Activated B cell treated with CpG ODN at 0.5 μM for 24 hours (primary cell): ENCODE measurements at regions of chr21 and their contacts with region 1.

Region 1: GRCh38 chr21:46635324-46636172 is at the start of gene PRMT2:
- DNase-seq: peak; percentile 99
- ATAC-seq: peak; percentile 92
- H3K4me3 Mint-ChIP-seq: peak within 1 kb of the TSS; percentile 92
- H3K27ac Mint-ChIP-seq: peak within 1 kb of the TSS; percentile 90
- H3K4me1 Mint-ChIP-seq: peaks cover 44% of the 10 kb centered on the region
- H3K27me3 Mint-ChIP-seq: peaks cover 11% of the 10 kb centered on the region
- CTCF ChIP-seq: no peak
- total RNA-seq, gene PRMT2: 48.5 and 52.4 TPM in 2 replicates

Region 2: GRCh38 chr21:46500224-46500856 is 135.2 kb before region 1 on chr21:
- CTCF ChIA-PET with region 1: no interaction called
- POLR2A ChIA-PET with region 1: interaction called, 15 read pairs
- intact Hi-C with region 1: no loop called
- DNase-seq: no peak
- ATAC-seq: no peak
- H3K4me3 Mint-ChIP-seq: no peak overlapping the region
- H3K27ac Mint-ChIP-seq: peak overlapping the region; percentile 21
- H3K4me1 Mint-ChIP-seq: peaks cover 31% of the 10 kb centered on the region
- H3K27me3 Mint-ChIP-seq: no peaks in the 10 kb centered on the region
- CTCF ChIP-seq: no peak

Region 3: GRCh38 chr21:46608672-46609111 is 26.9 kb before region 1 on chr21:
- CTCF ChIA-PET with region 1: no interaction called
- POLR2A ChIA-PET with region 1: interaction called, 10 read pairs
- intact Hi-C with region 1: no loop called
- DNase-seq: no peak
- ATAC-seq: no peak
- H3K4me3 Mint-ChIP-seq: no peak overlapping the region
- H3K27ac Mint-ChIP-seq: no peak overlapping the region
- H3K4me1 Mint-ChIP-seq: peaks cover 26% of the 10 kb centered on the region
- H3K27me3 Mint-ChIP-seq: peaks cover 5% of the 10 kb centered on the region
- CTCF ChIP-seq: no peak